Naive thymus-derived CD4-positive, alpha-beta T cell (primary cell): ENCODE measurements at regions of chr19 and their contacts with region 1.

Region 1: DNA sequence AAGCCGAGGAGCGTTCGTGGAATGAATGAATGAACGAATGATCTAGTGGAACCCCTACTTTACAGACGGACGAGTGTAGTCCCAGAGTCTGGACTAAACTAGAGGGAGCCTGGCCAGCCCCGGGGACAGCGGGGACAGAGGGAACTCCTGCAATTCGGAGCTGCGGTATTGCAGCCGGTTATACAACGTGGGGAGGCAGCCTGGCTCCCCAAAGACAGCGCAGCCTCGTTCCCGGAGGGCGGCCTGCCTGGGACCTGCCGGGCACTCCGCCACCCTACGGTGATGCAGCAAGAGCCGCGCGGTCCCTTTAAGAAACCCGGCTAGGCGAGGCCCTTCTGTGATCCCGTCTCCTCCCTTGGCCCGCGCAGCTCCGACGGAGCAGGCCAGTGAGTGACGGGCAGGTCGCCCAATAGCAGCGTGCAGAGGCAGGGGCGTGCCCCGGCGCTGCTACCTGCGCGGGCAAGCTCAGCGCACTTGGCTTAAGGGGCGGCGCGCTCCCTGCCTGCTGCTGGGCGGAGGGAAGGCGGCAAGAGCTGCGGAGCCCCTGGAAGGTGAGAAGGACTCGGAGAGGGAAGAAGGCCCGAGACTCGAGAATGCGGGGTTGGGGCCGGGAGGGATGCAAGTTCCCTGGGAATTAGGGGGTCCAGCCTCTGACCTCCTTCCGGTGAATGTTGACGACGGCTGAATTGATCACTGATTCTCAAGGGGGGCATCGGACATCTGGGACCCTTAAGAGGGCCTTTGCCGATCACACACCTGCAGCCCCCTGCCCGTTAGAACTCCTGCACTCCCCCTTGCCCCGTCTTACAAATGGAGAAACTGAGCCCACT is at the start of gene ABCA7:
- DNase-seq: peak; percentile 98 to 100 (median 99)
- ATAC-seq: peak; percentile 96
- H3K4me3 ChIP-seq: peak within 1 kb of the TSS; percentile 74
- H3K4me3 Mint-ChIP-seq: peak within 1 kb of the TSS; percentile 95 to 100 (median 98)
- H3K27ac ChIP-seq: peak within 1 kb of the TSS; percentile 74
- H3K27ac Mint-ChIP-seq: peak within 1 kb of the TSS; percentile 79 to 98 (median 95)
- H3K4me1 ChIP-seq: peaks cover 30 to 42% of the 10 kb centered on the region in 2 donors
- H3K4me1 Mint-ChIP-seq: peaks cover 29 to 61% (median 54%) of the 10 kb centered on the region in 7 donors
- H3K27me3 ChIP-seq: no peaks in the 10 kb centered on the region
- H3K27me3 Mint-ChIP-seq: no peaks in the 10 kb centered on the region
- total RNA-seq, gene ABCA7: 57.8 to 323 (median 155) TPM

Region 2: DNA sequence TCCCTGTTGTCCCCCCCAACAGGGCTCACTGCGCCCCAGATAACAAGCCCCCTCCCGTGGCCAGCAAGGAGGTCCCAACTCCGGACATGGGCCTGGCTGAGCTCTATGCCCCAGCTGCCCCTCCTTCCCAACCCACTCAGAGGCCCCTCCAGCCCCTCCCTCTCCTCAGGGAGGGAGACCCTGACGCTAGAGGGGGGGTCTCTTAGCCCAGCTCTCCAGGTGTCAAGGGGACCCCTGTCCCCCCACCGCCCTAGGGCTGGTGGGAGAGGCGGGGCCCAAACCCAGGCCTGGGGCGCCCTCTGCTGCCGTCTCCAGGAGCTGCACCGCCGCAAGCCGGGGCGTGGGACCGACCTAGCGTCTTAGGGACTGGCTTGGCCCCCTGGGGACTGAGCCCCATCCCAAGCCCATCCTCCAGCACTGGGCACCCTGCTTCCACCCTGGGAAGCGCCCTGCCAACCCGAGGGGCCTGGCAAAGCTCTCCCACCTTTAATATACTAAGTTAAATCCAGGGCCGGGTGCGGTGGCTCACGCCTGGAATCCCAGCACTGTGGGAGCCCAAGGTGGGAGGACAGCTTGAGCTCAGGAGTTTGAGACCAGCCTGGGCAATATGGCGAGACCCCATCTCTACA is 38.2 kb before region 1 on chr19:
- CTCF ChIA-PET with region 1: no interaction called
- POLR2A ChIA-PET with region 1: interaction called, 3 read pairs
- intact Hi-C with region 1: loop called in 1 of 2 experiments (anchors 2 kb)
- DNase-seq: peak; percentile 45 to 82 (median 70)
- ATAC-seq: peak; percentile 83
- H3K4me3 ChIP-seq: no peak overlapping the region
- H3K4me3 Mint-ChIP-seq: peak overlapping the region in 4 of 10 donors; percentile 21 to 75 (median 44)
- H3K27ac ChIP-seq: no peak overlapping the region
- H3K27ac Mint-ChIP-seq: peak overlapping the region in 1 of 9 donors; percentile 24
- H3K4me1 ChIP-seq: peaks cover 14 to 17% of the 10 kb centered on the region in 2 donors
- H3K4me1 Mint-ChIP-seq: peaks cover 1 to 13% (median 7%) of the 10 kb centered on the region in 7 donors
- H3K27me3 ChIP-seq: peaks cover 5 to 6% of the 10 kb centered on the region in 2 donors
- H3K27me3 Mint-ChIP-seq: peaks cover 7 to 39% (median 20%) of the 10 kb centered on the region in 5 donors

Region 3: DNA sequence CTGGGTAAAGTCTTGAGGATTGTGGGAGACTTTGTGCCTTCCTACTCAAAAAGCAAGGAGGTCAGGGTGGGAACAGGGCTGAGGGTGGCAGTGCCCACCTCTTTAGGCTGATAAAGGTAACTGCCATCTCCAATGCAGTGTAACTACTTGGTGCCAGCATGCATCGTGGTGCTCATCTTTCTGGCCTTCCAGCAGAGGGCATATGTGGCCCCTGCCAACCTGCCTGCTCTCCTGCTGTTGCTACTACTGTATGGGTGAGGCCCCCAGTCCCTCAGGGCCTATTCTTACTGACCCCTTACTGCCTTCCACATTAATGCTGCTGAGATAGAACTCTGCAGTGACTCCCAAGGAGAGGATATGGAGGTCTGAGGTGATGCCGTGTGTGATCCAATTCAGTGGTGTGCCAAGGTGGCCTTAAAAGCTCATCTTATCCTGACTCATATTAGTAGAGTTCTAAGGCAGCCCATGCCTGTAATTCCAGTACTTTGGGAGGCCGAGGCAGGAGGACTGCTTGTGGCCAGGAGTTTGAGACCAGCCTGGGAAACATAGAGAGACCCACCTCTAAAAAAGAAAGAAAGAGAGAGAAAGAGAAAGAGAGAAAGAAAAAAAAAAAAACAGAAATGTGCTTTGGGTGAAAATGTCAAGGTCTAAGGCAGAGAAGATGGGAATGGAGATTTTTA is 17.5 kb after region 1 on chr19:
- CTCF ChIA-PET with region 1: interaction called, 3 read pairs
- POLR2A ChIA-PET with region 1: interaction called, 136 read pairs
- intact Hi-C with region 1: loop called in 1 of 2 experiments (anchors 2 kb)
- DNase-seq: peak in 4 of 9 donors; percentile 35 to 54 (median 46)
- ATAC-seq: peak; percentile 67
- H3K4me3 ChIP-seq: no peak overlapping the region
- H3K4me3 Mint-ChIP-seq: peak overlapping the region in 6 of 10 donors; percentile 13 to 64 (median 48)
- H3K27ac ChIP-seq: peak overlapping the region; percentile 10
- H3K27ac Mint-ChIP-seq: peak overlapping the region; percentile 28 to 93 (median 79)
- H3K4me1 ChIP-seq: peaks cover 14 to 15% of the 10 kb centered on the region in 2 donors
- H3K4me1 Mint-ChIP-seq: peaks cover 7 to 33% (median 23%) of the 10 kb centered on the region in 7 donors
- H3K27me3 ChIP-seq: no peaks in the 10 kb centered on the region
- H3K27me3 Mint-ChIP-seq: no peaks in the 10 kb centered on the region

Region 4: GRCh38 chr19:1087813-1088415 is 48.1 kb after region 1 on chr19:
- CTCF ChIA-PET with region 1: interaction called, 3 read pairs
- POLR2A ChIA-PET with region 1: interaction called, 144 read pairs
- intact Hi-C with region 1: no loop called
- DNase-seq: peak in 7 of 9 donors; percentile 65 to 71 (median 67)
- ATAC-seq: peak; percentile 72
- H3K4me3 ChIP-seq: no peak overlapping the region
- H3K4me3 Mint-ChIP-seq: peak overlapping the region; percentile 23 to 83 (median 72)
- H3K27ac ChIP-seq: peak overlapping the region; percentile 84
- H3K27ac Mint-ChIP-seq: peak overlapping the region; percentile 74 to 98 (median 93)
- H3K4me1 ChIP-seq: peaks cover 28 to 32% of the 10 kb centered on the region in 2 donors
- H3K4me1 Mint-ChIP-seq: peaks cover 26 to 59% (median 36%) of the 10 kb centered on the region in 7 donors
- H3K27me3 ChIP-seq: no peaks in the 10 kb centered on the region
- H3K27me3 Mint-ChIP-seq: no peaks in the 10 kb centered on the region

Region 5: DNA sequence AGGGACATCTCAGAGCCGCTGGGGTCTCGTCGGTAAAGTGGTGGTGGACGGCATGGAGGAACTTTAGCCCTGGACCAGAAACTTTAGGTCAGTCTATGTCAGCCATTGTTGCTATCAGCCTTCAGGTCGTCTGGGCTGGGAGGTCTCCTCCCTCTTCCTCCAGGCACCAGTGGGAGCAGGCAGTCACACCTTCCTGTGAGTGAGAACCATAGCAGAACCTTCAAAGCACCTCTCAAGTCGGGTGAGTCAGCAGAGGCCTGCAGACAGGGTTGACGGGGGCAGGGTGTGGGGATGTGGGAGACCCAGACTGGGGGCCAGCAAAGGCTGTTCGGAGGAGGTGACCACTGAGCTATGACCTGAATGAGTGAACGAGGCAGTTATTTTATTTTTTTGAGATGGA is 149.6 kb after region 1 on chr19:
- CTCF ChIA-PET with region 1: interaction called, 3 read pairs
- POLR2A ChIA-PET with region 1: interaction called, 3 read pairs
- intact Hi-C with region 1: loop called in 1 of 2 experiments (anchors 5 kb)
- DNase-seq: peak in 1 of 9 donors; percentile 67
- ATAC-seq: peak; percentile 57
- H3K4me3 ChIP-seq: no peak overlapping the region
- H3K4me3 Mint-ChIP-seq: peak overlapping the region in 5 of 10 donors; percentile 33 to 63 (median 58)
- H3K27ac ChIP-seq: no peak overlapping the region
- H3K27ac Mint-ChIP-seq: peak overlapping the region; percentile 44 to 94 (median 79)
- H3K4me1 ChIP-seq: peaks cover 21 to 25% of the 10 kb centered on the region in 2 donors
- H3K4me1 Mint-ChIP-seq: peaks cover 11 to 27% (median 18%) of the 10 kb centered on the region in 7 donors
- H3K27me3 ChIP-seq: no peaks in the 10 kb centered on the region
- H3K27me3 Mint-ChIP-seq: no peaks in the 10 kb centered on the region